CD4-positive, alpha-beta T cell (primary cell): ENCODE measurements at regions of chr11 and their contacts with region 1.

Region 1: GRCh38 chr11:66328307-66329144 is 7.7 kb downstream of the RIN1 start:
- DNase-seq: peak; percentile 68 to 92 (median 77)
- ATAC-seq: peak; percentile 90
- H3K4me3 ChIP-seq: no peak overlapping the region
- H3K4me3 Mint-ChIP-seq: peak overlapping the region; percentile 42
- H3K27ac ChIP-seq: no peak overlapping the region
- H3K27ac Mint-ChIP-seq: peak overlapping the region; percentile 85
- H3K4me1 ChIP-seq: peaks cover 46% of the 10 kb centered on the region
- H3K4me1 Mint-ChIP-seq: peaks cover 39% of the 10 kb centered on the region
- H3K27me3 ChIP-seq: no peaks in the 10 kb centered on the region
- H3K27me3 Mint-ChIP-seq: no peaks in the 10 kb centered on the region
- CTCF ChIP-seq: peak; percentile 93

Region 2: GRCh38 chr11:66317723-66318599 is 10.6 kb before region 1 on chr11:
- CTCF ChIA-PET with region 1: interaction called, 30 read pairs
- POLR2A ChIA-PET with region 1: interaction called, 39 read pairs
- intact Hi-C with region 1: no loop called
- DNase-seq: peak; percentile 31 to 91 (median 64)
- ATAC-seq: peak; percentile 90
- H3K4me3 ChIP-seq: peak overlapping the region; percentile 14
- H3K4me3 Mint-ChIP-seq: peak overlapping the region; percentile 88
- H3K27ac ChIP-seq: peak overlapping the region; percentile 82 to 91
- H3K27ac Mint-ChIP-seq: peak overlapping the region; percentile 99
- H3K4me1 ChIP-seq: peaks cover 58% of the 10 kb centered on the region
- H3K4me1 Mint-ChIP-seq: peaks cover 64% of the 10 kb centered on the region
- H3K27me3 ChIP-seq: no peaks in the 10 kb centered on the region
- H3K27me3 Mint-ChIP-seq: no peaks in the 10 kb centered on the region
- CTCF ChIP-seq: no peak